ENCODE measurements at regions of chr14 and their contacts with region 1.

Region 1: DNA sequence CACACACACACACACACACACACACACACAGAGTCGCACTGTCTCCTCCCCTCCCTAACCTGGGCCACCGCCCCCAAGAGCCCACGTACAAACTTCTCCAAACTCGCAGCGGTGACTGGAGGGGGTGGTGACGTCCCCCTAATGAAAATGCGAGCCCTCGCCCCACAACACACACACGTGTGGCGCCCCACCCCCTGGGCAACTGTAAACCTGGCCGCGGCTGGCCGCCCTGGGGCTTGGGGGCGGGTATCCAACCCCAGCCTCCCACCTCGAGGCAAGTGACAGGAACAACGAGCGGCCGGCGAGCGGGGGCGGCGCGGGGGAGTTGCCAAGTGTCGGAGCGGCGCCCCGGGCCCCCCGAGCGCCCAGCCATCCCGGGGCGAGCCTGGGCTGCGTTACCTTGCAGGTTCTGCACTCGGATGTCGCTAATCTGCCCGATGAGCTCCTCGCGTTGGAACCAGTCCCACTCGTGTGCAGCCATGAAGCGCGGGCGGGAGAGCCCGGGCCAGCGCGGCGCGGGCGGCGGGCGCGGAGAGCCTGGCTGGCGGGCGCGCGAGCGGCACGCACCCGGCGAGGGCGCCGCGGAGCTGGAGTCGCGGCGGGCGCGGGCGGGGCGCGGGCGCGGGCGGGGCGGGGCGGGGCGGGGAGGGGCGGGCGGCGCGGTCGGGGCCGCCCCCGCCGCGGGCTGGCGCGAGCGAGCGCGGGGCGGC is at the start of gene CLMN:
- DNase-seq: peak in 1 of 10 donors; percentile 74
- H3K4me3 ChIP-seq: peak within 1 kb of the TSS; percentile 61 to 99 (median 85)
- H3K27ac ChIP-seq: peak within 1 kb of the TSS; percentile 79 to 100 (median 96)
- H3K27me3 ChIP-seq: no peaks in the 10 kb centered on the region
- CTCF ChIP-seq: peak in 4 of 56 donors; percentile 7 to 19 (median 16)
- total RNA-seq, gene CLMN: 22.3 to 262 (median 78.6) TPM

Region 2: DNA sequence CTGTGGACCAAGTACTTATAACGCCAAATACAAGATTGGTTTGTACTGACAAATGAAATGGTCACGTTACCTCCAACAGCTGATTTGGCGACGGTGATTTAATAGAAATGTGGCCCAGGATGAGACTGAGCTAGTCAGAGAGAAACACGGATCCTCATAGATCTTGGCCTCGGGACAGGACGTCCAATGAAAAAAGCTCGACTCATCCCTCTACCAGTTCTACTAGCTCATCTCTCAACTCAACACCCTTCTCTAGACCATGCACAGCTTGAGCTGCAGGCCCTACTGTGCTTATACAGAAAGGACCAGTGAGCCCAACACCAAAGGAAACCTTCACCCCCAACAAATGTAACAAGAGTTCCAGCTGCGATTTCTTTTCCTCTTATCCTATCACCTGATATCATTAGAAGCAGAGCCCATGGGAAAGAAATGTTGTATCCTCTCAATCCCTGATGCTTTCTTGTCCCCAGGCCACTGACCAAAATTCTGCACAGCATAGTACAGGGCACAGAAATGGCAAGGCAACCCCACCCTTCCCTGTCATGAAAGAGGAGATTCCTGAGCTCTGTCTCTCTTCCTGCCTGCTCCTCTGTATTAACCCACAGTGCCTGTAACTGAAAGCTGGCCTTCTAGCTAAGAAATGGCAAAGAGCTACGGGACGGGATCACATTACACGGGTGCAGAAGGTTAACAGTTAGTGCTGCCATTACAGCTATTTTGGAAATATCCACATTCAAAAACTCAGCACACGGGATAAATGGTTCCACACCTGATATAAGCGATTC is 201.3 kb before region 1 on chr14:
- intact Hi-C with region 1: loop called in 1 of 2 experiments (anchors 10 kb)
- DNase-seq: no peak
- H3K4me3 ChIP-seq: no peak overlapping the region
- H3K27ac ChIP-seq: peak overlapping the region in 57 of 59 donors; percentile 29 to 98 (median 86)
- H3K27me3 ChIP-seq: no peaks in the 10 kb centered on the region
- CTCF ChIP-seq: no peak

Region 3: DNA sequence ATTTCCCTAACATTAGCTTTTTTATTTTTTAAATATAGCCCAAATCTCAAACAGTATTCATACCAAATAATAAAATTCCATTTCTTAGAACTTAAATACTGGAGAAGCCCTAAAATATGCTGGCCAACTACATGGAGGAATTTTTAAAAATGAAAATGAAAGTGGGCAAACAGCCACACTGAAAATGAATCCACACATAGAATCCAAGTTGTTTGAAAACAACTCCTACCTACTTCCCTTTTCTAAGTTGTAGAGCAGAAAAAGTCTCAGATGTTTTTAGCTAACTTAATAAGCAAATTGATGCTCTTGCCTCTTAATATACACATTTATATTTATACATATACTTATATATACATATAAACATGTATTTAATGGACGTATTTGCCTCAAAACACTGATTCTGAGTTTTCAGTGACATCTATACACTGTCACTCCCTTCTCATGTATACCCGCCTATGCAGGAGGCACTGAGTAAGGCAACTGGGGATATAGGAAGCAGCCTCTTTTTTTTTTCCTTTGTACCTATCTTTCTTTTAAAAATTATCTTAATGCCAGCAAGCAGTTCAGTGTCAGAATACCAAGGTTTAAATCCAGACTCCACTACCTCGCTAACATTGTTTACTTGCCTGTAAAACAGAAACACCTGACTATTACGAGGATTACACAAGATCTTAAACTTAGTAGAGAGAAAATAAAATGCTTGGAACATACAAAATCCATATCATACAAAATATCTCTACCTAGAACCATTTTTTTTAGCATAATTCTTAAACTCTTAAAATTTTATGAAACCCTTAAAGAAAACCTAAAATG is 175.5 kb before region 1 on chr14:
- intact Hi-C with region 1: no loop called
- DNase-seq: no peak
- H3K4me3 ChIP-seq: peak overlapping the region in 24 of 59 donors; percentile 3 to 39 (median 12)
- H3K27ac ChIP-seq: peak overlapping the region in 58 of 59 donors; percentile 42 to 99 (median 92)
- H3K27me3 ChIP-seq: no peaks in the 10 kb centered on the region
- CTCF ChIP-seq: no peak

Region 4: DNA sequence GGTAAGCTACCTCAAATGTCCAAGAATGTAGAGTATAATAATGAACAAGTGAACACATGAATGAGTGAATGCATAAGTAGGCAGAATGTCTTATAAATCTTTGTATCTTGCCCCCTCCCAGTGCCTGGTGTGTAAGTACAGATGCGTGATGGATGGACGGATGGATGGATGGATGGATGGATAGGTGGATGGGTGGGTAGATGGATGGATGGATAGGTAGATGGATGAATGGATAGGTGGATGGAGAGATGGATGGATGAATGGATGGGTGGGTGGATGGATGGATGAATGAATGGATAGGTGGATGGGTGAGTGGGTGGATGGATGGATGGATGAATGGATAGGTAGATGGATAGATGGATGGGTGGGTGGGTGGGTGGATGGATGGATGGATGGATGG is 74.2 kb before region 1 on chr14:
- intact Hi-C with region 1: no loop called
- DNase-seq: no peak
- H3K4me3 ChIP-seq: no peak overlapping the region
- H3K27ac ChIP-seq: no peak overlapping the region
- H3K27me3 ChIP-seq: peaks cover 0 to 2% (median 0%) of the 10 kb centered on the region in 45 donors
- CTCF ChIP-seq: no peak

Region 5: GRCh38 chr14:95255487-95255886 is 64.0 kb before region 1 on chr14:
- intact Hi-C with region 1: loop called in 1 of 2 experiments (anchors 2 kb)
- DNase-seq: no peak
- H3K4me3 ChIP-seq: peak overlapping the region in 1 of 59 donors; percentile 3
- H3K27ac ChIP-seq: peak overlapping the region in 46 of 59 donors; percentile 12 to 87 (median 70)
- H3K27me3 ChIP-seq: no peaks in the 10 kb centered on the region
- CTCF ChIP-seq: no peak

Region 6: GRCh38 chr14:95361373-95362137 is 42.1 kb after region 1 on chr14:
- intact Hi-C with region 1: loop called (anchors 2 to 5 kb)
- DNase-seq: peak in 2 of 10 donors; percentile 40 to 46
- H3K4me3 ChIP-seq: no peak overlapping the region
- H3K27ac ChIP-seq: peak overlapping the region in 56 of 59 donors; percentile 43 to 97 (median 92)
- H3K27me3 ChIP-seq: peaks cover 0 to 22% (median 0%) of the 10 kb centered on the region in 45 donors
- CTCF ChIP-seq: peak in 55 of 56 donors; percentile 18 to 68 (median 53)

Region 7: DNA sequence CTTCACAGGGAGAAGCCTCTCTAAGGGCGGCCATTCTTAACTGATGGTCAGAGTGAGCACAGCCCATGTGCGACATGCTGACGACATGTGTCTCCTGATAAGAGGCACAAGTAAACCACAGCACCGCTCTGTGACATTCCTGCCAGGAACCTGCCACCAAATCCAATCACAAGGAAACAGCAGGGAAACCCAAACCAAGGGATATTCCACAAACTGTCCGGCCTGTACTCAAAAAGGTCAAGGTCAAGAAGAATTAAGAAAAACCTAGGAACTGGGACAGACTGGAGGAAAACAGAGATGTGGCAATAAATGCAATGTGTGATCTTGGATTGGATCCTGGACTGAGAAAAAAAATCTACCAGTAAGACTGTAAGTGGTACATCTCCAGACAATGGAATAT is 105.1 kb after region 1 on chr14:
- intact Hi-C with region 1: loop called in 1 of 2 experiments (anchors 5 kb)
- DNase-seq: no peak
- H3K4me3 ChIP-seq: no peak overlapping the region
- H3K27ac ChIP-seq: no peak overlapping the region
- H3K27me3 ChIP-seq: no peaks in the 10 kb centered on the region
- CTCF ChIP-seq: no peak

Measured in dorsolateral prefrontal cortex (tissue), 120 donors.